HepG2 (cell line): ENCODE measurements at regions of chr4 and their contacts with region 1.

Region 1: GRCh38 chr4:10018818-10019461 is 2.4 kb downstream of the SLC2A9 start:
- DNase-seq: no peak
- ATAC-seq: no peak
- H3K4me3 ChIP-seq: peak overlapping the region in 1 of 3 experiments; percentile 77; a peak in 1 of 6 replicates
- H3K27ac ChIP-seq: peak overlapping the region; percentile 89
- H3K4me1 ChIP-seq: peaks cover 96% of the 10 kb centered on the region
- H3K27me3 ChIP-seq: no peaks in the 10 kb centered on the region
- CTCF ChIP-seq: peak; percentile 28; the same call in 1 of the 2 replicates
- EP300 ChIP-seq: no peak
- POLR2A ChIP-seq: no peak
- RAD21 ChIP-seq: no peak

Region 2: GRCh38 chr4:9704551-9705332 is 314.2 kb before region 1 on chr4:
- CTCF ChIA-PET with region 1: no interaction called
- POLR2A ChIA-PET with region 1: no interaction called
- in situ Hi-C with region 1: loop called (anchors 10 kb)
- intact Hi-C with region 1: loop called (anchors 1 kb)
- DNase-seq: no peak
- ATAC-seq: no peak
- H3K4me3 ChIP-seq: no peak overlapping the region
- H3K27ac ChIP-seq: no peak overlapping the region
- H3K4me1 ChIP-seq: no peaks in the 10 kb centered on the region
- H3K27me3 ChIP-seq: no peaks in the 10 kb centered on the region
- CTCF ChIP-seq: no peak
- EP300 ChIP-seq: no peak
- POLR2A ChIP-seq: no peak
- RAD21 ChIP-seq: no peak

Region 3: GRCh38 chr4:9944431-9945425 is 74.2 kb before region 1 on chr4:
- CTCF ChIA-PET with region 1: no interaction called
- POLR2A ChIA-PET with region 1: no interaction called
- in situ Hi-C with region 1: no loop called
- intact Hi-C with region 1: loop called (anchors 5 kb)
- DNase-seq: no peak
- ATAC-seq: no peak
- H3K4me3 ChIP-seq: no peak overlapping the region
- H3K27ac ChIP-seq: no peak overlapping the region
- H3K4me1 ChIP-seq: peaks cover 25% of the 10 kb centered on the region
- H3K27me3 ChIP-seq: no peaks in the 10 kb centered on the region
- CTCF ChIP-seq: no peak
- EP300 ChIP-seq: no peak
- POLR2A ChIP-seq: no peak
- RAD21 ChIP-seq: no peak

Region 4: DNA sequence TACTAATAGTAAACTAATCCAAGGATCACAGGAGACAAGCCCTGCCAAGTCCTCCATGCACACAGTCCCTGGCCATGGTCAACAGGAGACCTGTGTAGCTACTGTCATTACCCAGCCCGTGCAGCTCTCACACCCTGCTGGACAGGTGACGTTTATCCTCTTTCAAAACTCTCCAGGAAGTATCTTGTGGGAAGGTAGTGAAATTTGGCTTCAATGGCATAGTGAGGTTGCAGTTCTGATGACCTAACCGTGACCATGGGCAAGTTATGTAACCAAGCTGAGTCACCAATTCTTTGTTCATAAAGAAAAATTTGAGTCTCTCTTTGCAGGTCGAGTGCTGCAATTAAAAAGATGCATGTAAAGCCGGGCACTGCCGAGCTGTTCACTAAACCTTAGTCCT is 13.7 kb after region 1 on chr4:
- CTCF ChIA-PET with region 1: no interaction called
- POLR2A ChIA-PET with region 1: interaction called, 11 read pairs
- in situ Hi-C with region 1: no loop called
- intact Hi-C with region 1: no loop called
- DNase-seq: peak; percentile 73
- ATAC-seq: peak; percentile 64
- H3K4me3 ChIP-seq: no peak overlapping the region; a peak in 1 of 6 replicates
- H3K27ac ChIP-seq: no peak overlapping the region
- H3K4me1 ChIP-seq: peaks cover 70% of the 10 kb centered on the region
- H3K27me3 ChIP-seq: no peaks in the 10 kb centered on the region
- CTCF ChIP-seq: no peak
- EP300 ChIP-seq: no peak
- POLR2A ChIP-seq: no peak
- RAD21 ChIP-seq: no peak

Region 5: GRCh38 chr4:10063544-10064300 is 44.8 kb after region 1 on chr4:
- CTCF ChIA-PET with region 1: no interaction called
- POLR2A ChIA-PET with region 1: no interaction called
- in situ Hi-C with region 1: no loop called
- intact Hi-C with region 1: loop called (anchors 1 kb)
- DNase-seq: peak; percentile 67
- ATAC-seq: peak; percentile 99
- H3K4me3 ChIP-seq: no peak overlapping the region
- H3K27ac ChIP-seq: no peak overlapping the region
- H3K4me1 ChIP-seq: peaks cover 23% of the 10 kb centered on the region
- H3K27me3 ChIP-seq: no peaks in the 10 kb centered on the region
- CTCF ChIP-seq: peak; percentile 96
- EP300 ChIP-seq: no peak
- POLR2A ChIP-seq: no peak
- RAD21 ChIP-seq: peak; percentile 97

Region 6: GRCh38 chr4:10151182-10151581 is 132.2 kb after region 1 on chr4:
- CTCF ChIA-PET with region 1: no interaction called
- POLR2A ChIA-PET with region 1: no interaction called
- in situ Hi-C with region 1: no loop called
- intact Hi-C with region 1: no loop called
- DNase-seq: no peak
- ATAC-seq: no peak
- H3K4me3 ChIP-seq: no peak overlapping the region
- H3K27ac ChIP-seq: no peak overlapping the region
- H3K4me1 ChIP-seq: no peaks in the 10 kb centered on the region
- H3K27me3 ChIP-seq: peaks cover 0 to 9% of the 10 kb centered on the region in 2 experiments; a peak in 2 of 5 replicates
- CTCF ChIP-seq: no peak
- EP300 ChIP-seq: no peak
- POLR2A ChIP-seq: no peak
- RAD21 ChIP-seq: no peak